PC-9 (cell line): ENCODE measurements at regions of chrX and their contacts with region 1.

Region 1: GRCh38 chrX:119521246-119521645 is 44.0 kb downstream of the STEEP1 start:
- DNase-seq: no peak
- H3K4me3 ChIP-seq: no peak overlapping the region
- H3K27ac ChIP-seq: no peak overlapping the region
- H3K4me1 ChIP-seq: no peaks in the 10 kb centered on the region
- H3K27me3 ChIP-seq: no peaks in the 10 kb centered on the region
- CTCF ChIP-seq: no peak

Region 2: GRCh38 chrX:119899125-119899524 is 377.9 kb after region 1 on chrX:
- CTCF ChIA-PET with region 1: no interaction called
- POLR2A ChIA-PET with region 1: interaction called, 10 read pairs
- intact Hi-C with region 1: no loop called
- DNase-seq: no peak
- H3K4me3 ChIP-seq: no peak overlapping the region
- H3K27ac ChIP-seq: no peak overlapping the region
- H3K4me1 ChIP-seq: 0 out of 2 replicates have a peak, but pooled peaks cover 4% of the 10 kb centered on the region
- H3K27me3 ChIP-seq: no peaks in the 10 kb centered on the region
- CTCF ChIP-seq: no peak